ENCODE measurements at regions of chr15 and their contacts with region 1.

Region 1: DNA sequence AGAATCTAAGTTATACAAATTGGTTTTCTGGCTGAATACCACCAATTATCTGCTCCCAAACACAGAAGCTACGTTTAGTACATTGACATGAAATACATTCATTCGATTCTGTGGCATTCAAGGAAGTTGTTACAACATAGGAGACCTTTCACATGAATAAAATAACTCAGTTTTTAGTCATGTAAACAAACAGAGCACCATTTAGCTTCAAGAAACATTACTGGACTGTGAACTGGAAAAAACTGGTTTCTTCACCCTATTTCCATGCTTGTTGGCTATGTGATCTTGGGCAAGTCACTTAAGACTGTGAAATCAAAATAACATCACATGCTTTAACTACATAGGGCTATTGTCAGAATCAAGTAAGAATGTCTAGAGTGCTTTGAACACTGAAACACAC is 46.2 kb downstream of the NRG4 start:
- DNase-seq: no peak

Region 2: DNA sequence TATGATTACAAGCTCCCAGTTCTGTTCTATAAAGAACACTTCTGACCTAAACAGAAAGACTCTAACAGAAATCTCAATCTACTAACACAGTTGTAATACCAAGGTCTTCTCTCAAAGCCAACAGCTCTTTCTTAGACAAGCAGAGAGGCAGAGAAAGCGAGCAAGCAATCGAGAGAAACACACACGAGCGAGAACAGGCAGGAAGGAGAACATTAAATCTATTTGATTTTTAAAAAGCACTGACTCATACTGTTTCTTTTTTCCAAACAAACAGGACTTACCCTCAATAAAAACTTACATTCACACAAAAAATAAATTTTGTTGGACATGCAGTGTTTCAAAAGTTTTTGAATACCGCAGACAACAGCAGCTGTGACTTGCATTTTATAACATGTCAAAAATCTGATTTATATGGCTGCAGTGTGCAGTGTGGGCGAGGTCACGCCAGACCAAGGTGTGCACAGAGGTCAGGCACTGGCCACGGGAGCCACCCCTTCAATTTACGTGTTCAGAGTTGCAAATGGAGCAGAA is 46.0 kb after region 1 on chr15 and contains the start of gene NRG4:
- intact Hi-C with region 1: loop called in 1 of 2 experiments (anchors 2 kb)
- DNase-seq: no peak
- total RNA-seq, gene NRG4: not detected

Measured in posterior vena cava (tissue), 2 donors.